ENCODE measurements at regions of chr6 and their contacts with region 1.

Region 1: GRCh38 chr6:149028767-149029405 is 282.1 kb downstream of the UST start:
- DNase-seq: peak; percentile 89
- H3K4me3 Mint-ChIP-seq: no peak overlapping the region
- H3K27ac Mint-ChIP-seq: peak overlapping the region; percentile 8
- H3K4me1 Mint-ChIP-seq: peaks cover 29% of the 10 kb centered on the region
- H3K27me3 Mint-ChIP-seq: no peaks in the 10 kb centered on the region
- CTCF ChIP-seq: peak; percentile 56

Region 2: GRCh38 chr6:147922799-147923198 is 1106.1 kb before region 1 on chr6:
- CTCF ChIA-PET with region 1: no interaction called
- POLR2A ChIA-PET with region 1: no interaction called
- intact Hi-C with region 1: no loop called
- DNase-seq: no peak
- H3K4me3 Mint-ChIP-seq: no peak overlapping the region
- H3K27ac Mint-ChIP-seq: no peak overlapping the region
- H3K4me1 Mint-ChIP-seq: no peaks in the 10 kb centered on the region
- H3K27me3 Mint-ChIP-seq: no peaks in the 10 kb centered on the region
- CTCF ChIP-seq: no peak

Region 3: DNA sequence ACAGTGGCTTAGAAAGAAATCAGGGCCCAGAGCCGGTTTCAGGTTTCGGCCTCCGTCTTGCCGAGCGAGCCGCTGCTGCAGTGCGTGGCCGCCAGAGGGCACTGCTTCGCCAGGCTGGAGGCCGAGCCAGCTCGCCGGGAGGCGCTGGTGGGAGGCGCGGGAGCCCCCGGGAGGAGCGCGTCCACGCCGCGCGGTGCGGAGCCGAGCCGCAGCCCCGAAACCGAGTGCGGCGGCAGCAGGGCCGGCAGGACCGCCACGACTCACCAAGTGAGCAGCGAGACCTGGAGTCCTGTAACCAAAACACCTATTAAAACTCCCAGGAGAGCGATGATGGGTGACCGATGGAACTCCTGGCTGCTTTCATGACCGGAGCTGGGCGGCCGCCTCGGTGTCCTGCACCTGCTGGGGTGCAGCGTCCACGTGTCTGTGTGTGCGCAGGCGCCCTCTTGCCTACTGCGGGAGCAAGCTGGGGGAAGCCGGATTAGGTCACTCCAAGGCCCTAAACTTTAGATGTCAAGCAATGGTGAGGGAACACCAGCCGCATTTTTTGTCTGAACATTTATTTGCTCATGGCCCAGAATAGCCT is 468.9 kb before region 1 on chr6:
- CTCF ChIA-PET with region 1: interaction called, 11 read pairs
- POLR2A ChIA-PET with region 1: no interaction called
- intact Hi-C with region 1: loop called (anchors 1 kb)
- DNase-seq: peak; percentile 47
- H3K4me3 Mint-ChIP-seq: peak overlapping the region; percentile 50
- H3K27ac Mint-ChIP-seq: no peak overlapping the region
- H3K4me1 Mint-ChIP-seq: no peaks in the 10 kb centered on the region
- H3K27me3 Mint-ChIP-seq: no peaks in the 10 kb centered on the region
- CTCF ChIP-seq: peak; percentile 96

Region 4: DNA sequence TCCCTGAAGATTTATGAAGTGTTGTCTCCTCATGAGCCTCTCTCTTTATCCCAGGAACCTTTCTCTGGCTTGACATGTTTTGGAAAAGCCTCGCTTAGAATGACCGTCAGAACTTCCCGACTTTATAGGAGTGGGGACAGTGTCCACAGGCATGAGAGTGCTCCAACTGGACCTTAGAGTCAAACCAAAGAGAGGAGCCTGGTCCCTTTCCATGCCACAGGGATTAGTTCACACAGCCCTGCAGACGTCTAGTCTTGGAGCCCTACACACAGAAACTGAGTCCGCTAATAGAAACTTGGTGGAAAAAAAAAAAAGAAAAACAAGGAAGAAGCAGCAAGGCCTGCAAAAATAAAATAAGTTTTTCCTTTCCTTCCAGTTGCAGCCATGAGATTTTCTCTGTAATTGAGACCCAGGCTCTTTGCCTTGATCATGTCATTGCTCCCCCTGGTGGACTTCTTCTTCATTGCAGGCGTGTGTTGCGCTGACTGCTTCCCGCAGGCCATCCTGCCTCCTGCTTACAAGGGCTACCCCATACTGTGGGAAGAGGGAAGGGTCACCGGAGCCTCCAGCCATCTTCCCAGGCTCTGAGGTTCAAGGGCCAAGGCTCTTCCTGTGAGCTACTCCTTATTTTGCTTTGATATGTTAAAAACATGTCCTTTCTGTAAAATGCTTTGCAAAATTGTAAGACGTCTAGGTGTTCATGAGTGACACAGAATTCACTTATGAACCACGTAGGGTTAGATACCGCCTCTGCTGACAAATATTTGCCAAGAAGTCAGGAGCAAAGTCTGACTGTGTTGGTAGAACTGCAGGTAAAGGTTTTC is 81.1 kb before region 1 on chr6:
- CTCF ChIA-PET with region 1: interaction called, 3 read pairs
- POLR2A ChIA-PET with region 1: no interaction called
- intact Hi-C with region 1: loop called (anchors 1 kb)
- DNase-seq: peak; percentile 86
- H3K4me3 Mint-ChIP-seq: no peak overlapping the region
- H3K27ac Mint-ChIP-seq: no peak overlapping the region
- H3K4me1 Mint-ChIP-seq: peaks cover 8% of the 10 kb centered on the region
- H3K27me3 Mint-ChIP-seq: no peaks in the 10 kb centered on the region
- CTCF ChIP-seq: peak; percentile 81

Region 5: DNA sequence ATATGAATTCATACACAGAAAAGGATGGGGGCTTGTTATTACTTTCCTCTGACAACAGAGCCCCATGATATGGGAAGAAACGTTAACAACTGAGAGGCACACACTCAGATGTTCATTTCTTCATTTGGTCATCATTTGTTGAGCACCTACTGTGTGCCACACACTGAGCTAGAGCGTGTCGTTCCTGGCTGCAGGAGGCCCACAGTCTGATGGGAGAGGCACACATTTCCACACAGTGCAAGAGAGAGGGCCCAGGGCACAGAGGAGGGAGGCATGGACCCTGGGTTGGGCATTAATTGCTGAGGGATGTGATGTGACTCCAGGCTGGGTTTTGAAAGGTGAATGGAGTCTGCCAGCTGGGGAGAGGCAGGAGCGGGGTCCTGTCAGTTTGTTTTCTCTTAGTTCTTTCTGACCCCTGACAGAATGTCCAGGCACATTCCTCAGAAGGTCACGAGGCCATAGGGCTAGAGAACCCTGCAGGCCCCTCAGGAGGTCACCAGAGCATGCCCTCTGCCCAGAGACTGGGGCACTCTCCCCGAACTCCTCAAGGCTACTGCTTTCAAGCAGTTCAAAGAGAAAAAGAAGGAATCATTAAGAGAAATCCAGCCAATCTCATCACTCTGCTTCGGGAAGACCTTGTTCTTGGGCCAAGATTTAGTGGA is 65.9 kb before region 1 on chr6:
- CTCF ChIA-PET with region 1: no interaction called
- POLR2A ChIA-PET with region 1: no interaction called
- intact Hi-C with region 1: no loop called
- DNase-seq: no peak
- H3K4me3 Mint-ChIP-seq: no peak overlapping the region
- H3K27ac Mint-ChIP-seq: no peak overlapping the region
- H3K4me1 Mint-ChIP-seq: no peaks in the 10 kb centered on the region
- H3K27me3 Mint-ChIP-seq: no peaks in the 10 kb centered on the region
- CTCF ChIP-seq: no peak

Region 6: DNA sequence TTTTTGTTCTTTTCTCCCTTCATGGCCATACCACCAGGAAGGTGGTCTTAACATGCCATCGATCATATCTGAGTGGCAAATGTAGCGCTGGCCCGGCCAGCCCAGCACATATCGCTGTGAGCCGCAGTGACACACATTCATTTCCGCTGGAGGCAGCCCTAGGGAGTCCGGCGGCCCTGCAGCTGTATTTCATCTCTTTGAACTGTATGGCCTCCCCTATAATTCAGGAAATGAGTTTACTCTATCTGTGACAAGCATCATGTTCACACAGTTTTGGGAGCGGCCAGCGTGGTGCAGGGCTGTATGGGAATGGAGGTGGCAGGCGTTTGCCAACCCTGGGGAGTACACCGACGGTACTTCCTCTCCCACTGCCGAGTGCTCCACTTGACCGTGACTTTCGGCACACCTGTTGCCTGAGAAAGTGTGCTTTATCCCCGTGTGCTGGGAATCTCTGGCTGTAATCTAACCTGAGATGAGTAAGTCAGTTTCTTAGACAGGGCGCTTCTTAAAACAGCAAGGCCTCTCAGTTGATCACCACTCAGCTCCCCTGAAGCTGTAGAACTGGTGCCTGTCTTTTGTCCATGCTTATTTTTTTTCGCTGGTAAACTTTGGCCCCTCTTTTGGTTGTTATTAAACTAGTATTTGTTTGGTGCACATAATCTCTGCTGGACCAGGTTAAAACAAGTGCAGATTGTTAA is 31.6 kb after region 1 on chr6:
- CTCF ChIA-PET with region 1: interaction called, 11 read pairs
- POLR2A ChIA-PET with region 1: interaction called, 50 read pairs
- intact Hi-C with region 1: no loop called
- DNase-seq: no peak
- H3K4me3 Mint-ChIP-seq: no peak overlapping the region
- H3K27ac Mint-ChIP-seq: peak overlapping the region; percentile 63
- H3K4me1 Mint-ChIP-seq: peaks cover 10% of the 10 kb centered on the region
- H3K27me3 Mint-ChIP-seq: no peaks in the 10 kb centered on the region
- CTCF ChIP-seq: no peak

Region 7: GRCh38 chr6:149137594-149137993 is 108.7 kb after region 1 on chr6:
- CTCF ChIA-PET with region 1: no interaction called
- POLR2A ChIA-PET with region 1: no interaction called
- intact Hi-C with region 1: no loop called
- DNase-seq: peak; percentile 30
- H3K4me3 Mint-ChIP-seq: no peak overlapping the region
- H3K27ac Mint-ChIP-seq: no peak overlapping the region
- H3K4me1 Mint-ChIP-seq: no peaks in the 10 kb centered on the region
- H3K27me3 Mint-ChIP-seq: no peaks in the 10 kb centered on the region
- CTCF ChIP-seq: no peak

Region 8: GRCh38 chr6:149316798-149317655 is 288.1 kb after region 1 on chr6:
- CTCF ChIA-PET with region 1: interaction called, 3 read pairs
- POLR2A ChIA-PET with region 1: interaction called, 43 read pairs
- intact Hi-C with region 1: loop called (anchors 2 kb)
- DNase-seq: peak; percentile 89
- H3K4me3 Mint-ChIP-seq: peak overlapping the region; percentile 82
- H3K27ac Mint-ChIP-seq: peak overlapping the region; percentile 54
- H3K4me1 Mint-ChIP-seq: peaks cover 15% of the 10 kb centered on the region
- H3K27me3 Mint-ChIP-seq: no peaks in the 10 kb centered on the region
- CTCF ChIP-seq: no peak

Region 9: GRCh38 chr6:149431905-149432775 is 403.3 kb after region 1 on chr6:
- CTCF ChIA-PET with region 1: interaction called, 74 read pairs
- POLR2A ChIA-PET with region 1: interaction called, 15 read pairs
- intact Hi-C with region 1: loop called (anchors 1 kb)
- DNase-seq: peak; percentile 87
- H3K4me3 Mint-ChIP-seq: no peak overlapping the region
- H3K27ac Mint-ChIP-seq: no peak overlapping the region
- H3K4me1 Mint-ChIP-seq: peaks cover 4% of the 10 kb centered on the region
- H3K27me3 Mint-ChIP-seq: no peaks in the 10 kb centered on the region
- CTCF ChIP-seq: peak; percentile 92

Region 10: DNA sequence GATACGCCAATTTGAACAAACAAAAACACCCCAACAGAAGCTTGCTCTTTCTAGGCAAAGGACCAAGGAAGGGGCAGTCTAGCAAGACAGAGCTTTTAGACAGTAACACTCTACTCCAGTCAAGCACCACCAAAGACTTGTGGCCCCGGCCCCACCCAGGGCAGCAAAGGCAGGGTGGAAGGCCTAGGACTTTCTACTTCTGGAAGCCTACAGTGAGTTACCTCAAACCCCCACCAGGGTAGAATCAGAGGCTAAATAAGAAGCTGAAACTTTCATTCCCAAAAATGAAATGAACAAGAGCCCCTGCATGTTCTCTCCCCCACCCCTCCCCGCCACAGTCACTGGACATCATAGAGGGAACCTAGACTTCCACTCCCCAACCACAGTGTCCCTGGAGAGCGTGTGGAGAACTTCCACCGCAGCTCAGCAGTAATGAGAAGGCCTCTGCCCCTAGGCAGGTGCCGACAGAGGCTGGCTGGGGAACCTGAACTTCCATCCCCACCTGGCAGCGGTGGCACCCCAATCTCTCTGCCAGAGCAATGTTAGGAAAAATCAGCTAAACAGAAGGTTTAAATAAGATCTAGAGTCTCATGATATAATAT is 579.6 kb after region 1 on chr6:
- CTCF ChIA-PET with region 1: no interaction called
- POLR2A ChIA-PET with region 1: no interaction called
- intact Hi-C with region 1: no loop called
- DNase-seq: no peak
- H3K4me3 Mint-ChIP-seq: no peak overlapping the region
- H3K27ac Mint-ChIP-seq: no peak overlapping the region
- H3K4me1 Mint-ChIP-seq: no peaks in the 10 kb centered on the region
- H3K27me3 Mint-ChIP-seq: no peaks in the 10 kb centered on the region
- CTCF ChIP-seq: no peak

Measured in MCF 10A (cell line).